Transverse colon (tissue), 4 donors: ENCODE measurements at regions of chr15 and their contacts with region 1.

Region 1: DNA sequence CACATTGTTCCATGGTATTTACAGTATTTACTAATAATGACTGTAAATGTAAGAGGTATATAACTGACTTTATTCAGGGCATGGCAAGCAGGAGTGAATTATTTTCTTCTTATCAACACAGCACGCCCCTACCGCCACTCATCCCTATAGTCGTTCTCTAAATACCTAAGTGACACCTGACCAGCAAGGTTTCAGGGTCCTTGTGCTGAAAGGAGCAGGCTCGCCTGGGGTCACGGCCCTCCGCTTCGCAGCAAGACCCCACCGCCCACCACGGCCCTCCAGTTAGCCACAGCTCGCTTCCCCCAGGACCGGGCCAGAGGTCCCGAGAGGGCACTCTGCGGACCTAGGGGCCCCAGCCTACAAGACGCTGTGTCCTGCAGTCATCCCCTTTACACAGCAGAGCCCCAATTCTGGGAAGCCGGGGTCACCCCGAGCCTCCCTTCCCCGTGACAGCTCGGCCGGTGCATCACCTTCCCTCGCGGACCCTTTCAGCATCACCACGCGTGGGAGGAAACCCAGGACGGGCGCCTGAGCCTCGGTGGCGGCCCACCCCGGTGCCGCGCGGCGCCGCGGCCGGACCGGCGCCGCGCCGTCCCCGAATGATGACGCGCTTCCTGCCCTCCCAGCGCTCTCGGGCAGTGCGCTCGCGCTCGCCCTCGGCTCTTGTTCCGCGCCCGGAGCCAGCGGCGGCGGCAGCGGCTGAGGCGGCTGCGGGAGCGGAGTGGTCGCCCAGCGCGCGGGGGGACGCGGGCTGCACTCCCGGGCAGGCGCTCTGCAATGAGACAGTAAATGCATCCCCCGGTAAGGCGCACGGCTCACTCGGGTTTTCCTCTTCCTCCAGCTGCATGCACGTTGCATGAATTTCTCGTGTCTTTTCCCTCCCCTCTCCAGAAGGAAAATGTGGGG is 225.1 kb upstream of the C2CD4B start:
- DNase-seq: peak; percentile 74
- H3K4me3 ChIP-seq: peak within 1 kb of the TSS; percentile 71 to 98 (median 89)
- H3K27ac ChIP-seq: peak within 1 kb of the TSS; percentile 80 to 88 (median 88)
- H3K4me1 ChIP-seq: peaks cover 5 to 17% (median 12%) of the 10 kb centered on the region in 4 donors
- H3K27me3 ChIP-seq: no peaks in the 10 kb centered on the region
- CTCF ChIP-seq: no peak
- EP300 ChIP-seq: no peak
- POLR2A ChIP-seq: peak; percentile 55

Region 2: GRCh38 chr15:62469874-62470688 is 79.9 kb after region 1 on chr15:
- in situ Hi-C with region 1: no loop called
- intact Hi-C with region 1: loop called (anchors 10 kb)
- DNase-seq: no peak
- H3K4me3 ChIP-seq: no peak overlapping the region
- H3K27ac ChIP-seq: peak overlapping the region; percentile 57 to 71 (median 68)
- H3K4me1 ChIP-seq: peaks cover 0 to 48% (median 15%) of the 10 kb centered on the region in 4 donors
- H3K27me3 ChIP-seq: no peaks in the 10 kb centered on the region
- CTCF ChIP-seq: no peak
- EP300 ChIP-seq: no peak
- POLR2A ChIP-seq: no peak

Region 3: GRCh38 chr15:62486041-62486440 is 95.9 kb after region 1 on chr15:
- in situ Hi-C with region 1: no loop called
- intact Hi-C with region 1: no loop called
- DNase-seq: no peak
- H3K4me3 ChIP-seq: no peak overlapping the region
- H3K27ac ChIP-seq: no peak overlapping the region
- H3K4me1 ChIP-seq: peaks cover 0 to 16% (median 8%) of the 10 kb centered on the region in 4 donors
- H3K27me3 ChIP-seq: no peaks in the 10 kb centered on the region
- CTCF ChIP-seq: no peak
- EP300 ChIP-seq: no peak
- POLR2A ChIP-seq: no peak

Region 4: GRCh38 chr15:62649793-62650420 is 259.8 kb after region 1 on chr15:
- in situ Hi-C with region 1: loop called in 1 of 4 experiments (anchors 25 kb)
- intact Hi-C with region 1: no loop called
- DNase-seq: no peak
- H3K4me3 ChIP-seq: no peak overlapping the region
- H3K27ac ChIP-seq: no peak overlapping the region
- H3K4me1 ChIP-seq: peaks cover 0 to 11% (median 2%) of the 10 kb centered on the region in 4 donors
- H3K27me3 ChIP-seq: no peaks in the 10 kb centered on the region
- CTCF ChIP-seq: no peak
- EP300 ChIP-seq: no peak
- POLR2A ChIP-seq: no peak